ENCODE measurements at regions of chr6 and their contacts with region 1.

Region 1: DNA sequence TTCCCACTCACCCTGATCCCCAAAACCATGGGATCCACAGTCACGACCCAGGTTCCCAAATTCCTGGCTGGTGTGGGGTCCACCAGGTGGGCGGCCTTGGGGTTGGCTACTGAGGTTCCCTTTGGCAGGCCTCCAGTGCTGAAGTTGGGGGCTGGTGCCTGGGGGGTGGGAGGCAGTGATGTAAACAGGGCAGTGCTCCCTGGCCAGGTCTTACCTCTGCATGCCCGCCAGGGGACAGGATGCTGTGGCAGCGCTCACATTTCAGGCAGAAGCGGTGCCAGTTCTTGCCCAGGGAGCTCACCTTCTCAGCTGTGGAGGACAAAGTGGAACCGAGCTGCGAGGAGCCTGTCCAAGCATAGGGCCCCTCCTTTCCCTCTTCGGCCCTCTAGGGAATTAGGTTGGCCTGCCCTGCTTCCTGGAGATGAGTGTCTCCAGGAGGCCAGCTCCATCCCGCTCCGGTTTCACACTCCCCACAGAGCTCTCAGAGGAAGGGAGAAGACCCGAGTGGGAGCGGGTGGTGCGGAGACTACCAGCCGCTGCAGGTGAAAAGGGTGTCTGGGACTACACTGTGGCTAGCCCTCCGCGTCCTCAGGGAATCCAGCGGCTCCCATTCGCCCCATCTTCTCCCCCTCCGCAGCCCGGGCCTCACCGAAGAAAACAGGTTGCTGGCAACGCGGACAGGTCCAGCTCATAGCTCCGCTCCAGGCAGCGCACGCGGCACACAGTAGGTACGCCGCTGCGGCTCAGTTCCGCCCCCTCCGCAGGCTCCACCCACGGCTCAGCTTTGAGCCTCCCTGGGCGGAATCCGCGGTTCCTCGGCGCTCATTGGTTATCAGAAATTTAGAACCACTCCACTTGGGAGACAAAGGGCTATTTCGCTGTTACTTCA is at the start of gene CRIP3:
- DNase-seq: peak; percentile 59
- H3K4me3 Mint-ChIP-seq: peak within 1 kb of the TSS; percentile 72
- H3K27ac Mint-ChIP-seq: no peak within 1 kb of the TSS
- H3K4me1 Mint-ChIP-seq: peaks cover 12% of the 10 kb centered on the region
- H3K27me3 Mint-ChIP-seq: peaks cover 14% of the 10 kb centered on the region
- total RNA-seq, gene CRIP3: 0.88 TPM in 1 of 2 experiments, not detected in the other

Region 2: GRCh38 chr6:43297644-43298564 is 10.4 kb before region 1 on chr6 and contains the start of gene SLC22A7:
- CTCF ChIA-PET with region 1: interaction called, 13 read pairs
- POLR2A ChIA-PET with region 1: interaction called, 4 read pairs
- DNase-seq: no peak
- H3K4me3 Mint-ChIP-seq: no peak within 1 kb of the TSS
- H3K27ac Mint-ChIP-seq: no peak within 1 kb of the TSS
- H3K4me1 Mint-ChIP-seq: peaks cover 3% of the 10 kb centered on the region
- H3K27me3 Mint-ChIP-seq: peaks cover 24% of the 10 kb centered on the region
- total RNA-seq, gene SLC22A7: not detected

Region 3: GRCh38 chr6:43391440-43392031 is 83.2 kb after region 1 on chr6:
- CTCF ChIA-PET with region 1: interaction called, 56 read pairs
- POLR2A ChIA-PET with region 1: no interaction called
- DNase-seq: peak; percentile 57
- H3K4me3 Mint-ChIP-seq: peak overlapping the region; percentile 31
- H3K27ac Mint-ChIP-seq: no peak overlapping the region
- H3K4me1 Mint-ChIP-seq: peaks cover 24% of the 10 kb centered on the region
- H3K27me3 Mint-ChIP-seq: peaks cover 63% of the 10 kb centered on the region